H1 (cell line): ENCODE measurements at regions of chr1 and their contacts with region 1.

Region 1: GRCh38 chr1:205190845-205191577 is 20.5 kb downstream of the DSTYK start:
- DNase-seq: no peak
- H3K4me3 ChIP-seq: peak overlapping the region in 2 of 4 experiments; percentile 15 to 34; a peak in 3 of 8 replicates
- H3K27ac ChIP-seq: no peak overlapping the region
- H3K4me1 ChIP-seq: peaks cover 5 to 45% (median 30%) of the 10 kb centered on the region in 4 experiments
- H3K27me3 ChIP-seq: no peaks in the 10 kb centered on the region
- CTCF ChIP-seq: no peak
- EP300 ChIP-seq: no peak
- POLR2A ChIP-seq: no peak
- RAD21 ChIP-seq: no peak

Region 2: DNA sequence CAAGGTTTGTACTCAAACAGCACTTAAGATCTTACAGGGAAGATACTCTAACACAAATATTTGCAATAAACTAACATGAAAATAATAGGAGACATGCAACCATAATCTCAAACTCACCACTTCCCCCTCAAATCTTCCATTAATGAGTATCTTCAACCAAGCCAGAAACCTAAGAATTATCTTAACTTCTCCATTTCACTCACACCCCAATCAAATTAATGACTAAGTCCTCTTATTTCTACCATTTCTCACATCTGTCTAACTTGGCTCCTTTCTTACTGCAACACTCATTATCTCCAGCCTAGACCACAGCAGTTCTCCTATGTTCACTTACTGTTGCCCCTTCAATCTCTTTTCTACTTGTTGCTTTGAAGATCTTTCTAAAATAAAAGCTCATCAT is 79.7 kb before region 1 on chr1:
- CTCF ChIA-PET with region 1: no interaction called
- POLR2A ChIA-PET with region 1: no interaction called
- DNase-seq: no peak
- H3K4me3 ChIP-seq: no peak overlapping the region
- H3K27ac ChIP-seq: no peak overlapping the region
- H3K4me1 ChIP-seq: no peaks in the 10 kb centered on the region; a peak in 1 of 7 replicates
- H3K27me3 ChIP-seq: no peaks in the 10 kb centered on the region
- CTCF ChIP-seq: no peak
- EP300 ChIP-seq: no peak
- POLR2A ChIP-seq: no peak
- RAD21 ChIP-seq: no peak

Region 3: GRCh38 chr1:205204552-205204951 is 13.5 kb after region 1 on chr1:
- CTCF ChIA-PET with region 1: interaction called, 6 read pairs
- POLR2A ChIA-PET with region 1: interaction called, 18 read pairs
- DNase-seq: no peak
- H3K4me3 ChIP-seq: no peak overlapping the region
- H3K27ac ChIP-seq: no peak overlapping the region
- H3K4me1 ChIP-seq: peaks cover 0 to 10% (median 5%) of the 10 kb centered on the region in 4 experiments
- H3K27me3 ChIP-seq: no peaks in the 10 kb centered on the region
- CTCF ChIP-seq: no peak
- EP300 ChIP-seq: no peak
- POLR2A ChIP-seq: no peak
- RAD21 ChIP-seq: no peak